ENCODE measurements at regions of chr17 and their contacts with region 1.

Region 1: DNA sequence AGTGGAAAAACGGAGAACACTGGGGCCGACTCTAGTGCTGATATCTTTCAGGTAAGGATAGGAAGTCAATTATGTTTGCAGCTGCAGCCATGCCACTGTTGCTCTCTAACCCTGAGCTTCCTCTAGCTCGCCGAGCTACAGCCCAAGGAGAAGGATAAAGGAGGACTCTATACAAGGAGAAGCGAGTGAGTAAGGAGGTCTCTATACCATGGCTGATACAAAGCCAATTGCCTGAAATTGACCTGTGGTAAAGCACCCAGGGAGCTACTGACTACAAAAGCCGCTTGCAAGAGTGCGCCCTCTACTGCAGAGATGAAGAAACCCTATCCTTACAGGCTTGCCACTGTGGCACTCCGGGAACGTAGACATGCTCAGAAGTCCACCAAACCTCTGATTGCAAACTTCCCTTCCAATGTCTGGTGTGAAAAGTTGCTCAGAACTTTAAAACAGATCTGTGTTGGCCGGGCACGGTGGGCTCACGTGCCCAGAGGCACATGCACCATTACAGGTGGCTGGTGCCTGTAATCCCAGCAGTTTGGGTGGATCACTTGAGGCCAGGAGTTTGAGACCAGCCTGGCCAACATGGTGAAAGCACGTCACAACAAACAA is 10.8 kb upstream of the SLC46A1 start:
- DNase-seq: peak; percentile 69
- CTCF ChIP-seq: peak; percentile 69

Region 2: DNA sequence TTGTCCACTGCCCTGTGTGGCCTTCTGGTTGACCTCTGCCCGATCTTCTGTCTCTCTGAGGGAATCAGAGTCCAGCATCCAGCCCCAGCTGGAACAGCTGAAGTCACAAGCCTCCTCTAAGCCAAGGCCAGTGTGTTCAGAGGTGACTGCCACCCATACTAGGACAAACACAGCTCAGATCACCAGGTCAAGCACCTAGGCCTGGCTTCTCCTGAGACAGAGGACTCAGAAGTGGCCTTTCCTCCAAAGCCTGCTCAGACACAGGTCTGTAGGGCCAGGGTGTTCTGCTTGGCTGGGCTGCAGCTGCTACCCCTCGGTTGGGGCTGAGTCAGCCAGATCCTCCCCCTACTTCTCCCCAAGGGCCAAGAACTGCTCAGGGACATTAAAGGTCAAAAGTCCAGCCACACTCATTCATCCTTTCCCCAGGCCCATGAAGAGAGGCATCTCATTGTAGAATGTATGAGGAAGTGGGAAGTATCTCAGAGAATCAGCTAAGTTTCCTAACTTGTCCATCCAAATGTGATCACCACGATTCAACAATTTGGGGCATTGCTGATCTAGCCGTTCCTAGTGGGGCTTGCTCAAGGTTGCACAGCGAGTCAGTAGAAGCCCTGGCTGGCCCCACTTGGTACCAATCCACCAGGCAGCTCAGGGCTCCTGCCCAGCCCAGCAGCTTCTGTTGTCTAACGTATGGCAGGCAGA is 18.4 kb before region 1 on chr17:
- CTCF ChIA-PET with region 1: interaction called, 37 read pairs
- POLR2A ChIA-PET with region 1: no interaction called
- DNase-seq: no peak
- CTCF ChIP-seq: no peak

Region 3: GRCh38 chr17:28405632-28406472 is 11.0 kb before region 1 on chr17 and contains the start of gene SLC46A1:
- CTCF ChIA-PET with region 1: interaction called, 37 read pairs
- POLR2A ChIA-PET with region 1: interaction called, 3 read pairs
- DNase-seq: peak; percentile 85
- CTCF ChIP-seq: no peak

Region 4: GRCh38 chr17:28446728-28447395 is 30.1 kb after region 1 on chr17:
- CTCF ChIA-PET with region 1: interaction called, 10 read pairs
- POLR2A ChIA-PET with region 1: no interaction called
- DNase-seq: no peak
- CTCF ChIP-seq: no peak

Region 5: DNA sequence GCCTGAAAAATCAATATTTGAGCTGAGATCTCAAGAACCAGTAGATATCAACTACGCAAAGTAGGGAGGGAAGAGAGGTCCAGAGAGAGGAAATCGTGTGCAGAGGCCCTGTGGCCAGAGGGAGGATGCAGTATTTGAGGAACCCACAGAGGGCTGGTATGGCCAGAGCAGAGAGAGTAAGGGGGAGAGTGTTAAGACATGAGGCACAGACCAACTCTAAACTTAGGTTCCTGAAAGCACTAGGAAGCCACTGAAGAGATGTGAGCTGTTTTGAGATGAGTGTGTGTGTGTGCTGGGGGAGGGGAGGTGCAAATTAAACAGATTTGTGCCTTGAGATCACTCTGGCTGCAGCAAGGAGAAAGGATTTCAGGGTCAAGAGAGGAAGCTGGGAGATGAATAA is 67.5 kb after region 1 on chr17:
- CTCF ChIA-PET with region 1: interaction called, 10 read pairs
- POLR2A ChIA-PET with region 1: no interaction called
- DNase-seq: peak; percentile 77
- CTCF ChIP-seq: no peak